Panc1 (cell line): ENCODE measurements at regions of chr17 and their contacts with region 1.

Region 1: GRCh38 chr17:41548844-41549595 is 20.9 kb upstream of the KRT19 start:
- DNase-seq: no peak
- ATAC-seq: peak; percentile 88
- H3K4me3 ChIP-seq: peak overlapping the region; percentile 24 to 39
- H3K27ac ChIP-seq: peak overlapping the region; percentile 91
- H3K4me1 ChIP-seq: peaks cover 41% of the 10 kb centered on the region
- H3K27me3 ChIP-seq: no peaks in the 10 kb centered on the region
- CTCF ChIP-seq: peak; percentile 95

Region 2: DNA sequence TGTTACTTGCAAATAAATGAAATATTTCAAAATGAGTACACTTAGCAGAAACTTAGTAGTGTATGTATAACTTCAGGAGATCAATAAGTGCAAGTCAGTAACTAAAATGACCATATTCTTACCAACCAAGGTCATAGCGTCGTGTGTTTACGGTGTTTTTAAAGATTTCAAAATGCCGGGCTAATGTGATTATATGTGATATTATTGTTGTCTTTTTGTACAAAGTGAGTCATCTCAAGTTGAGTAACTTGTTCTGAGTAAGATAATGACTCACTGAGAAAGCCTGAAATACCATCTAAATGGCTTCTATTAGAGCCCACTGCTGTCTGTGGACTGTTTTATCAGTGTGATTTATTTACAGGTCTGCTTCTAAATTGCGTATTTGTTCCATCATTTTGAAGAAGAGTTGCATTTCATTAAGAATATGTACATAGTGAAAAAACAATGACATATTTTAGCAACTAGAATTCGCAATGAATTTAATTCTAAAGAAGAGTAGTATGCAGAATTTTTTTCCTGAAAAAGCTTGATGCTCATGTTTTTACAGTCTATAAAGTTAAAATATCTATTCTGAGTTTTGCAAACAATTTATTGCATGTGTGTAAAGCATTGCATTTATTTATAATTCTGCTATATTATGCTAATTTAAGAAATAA is 694.7 kb before region 1 on chr17:
- CTCF ChIA-PET with region 1: interaction called, 5 read pairs
- POLR2A ChIA-PET with region 1: no interaction called
- in situ Hi-C with region 1: no loop called
- intact Hi-C with region 1: loop called (anchors 5 kb)
- DNase-seq: peak; percentile 50
- ATAC-seq: peak; percentile 85
- H3K4me3 ChIP-seq: no peak overlapping the region
- H3K27ac ChIP-seq: no peak overlapping the region
- H3K4me1 ChIP-seq: peaks cover 5% of the 10 kb centered on the region; the same call in 1 of the 2 replicates
- H3K27me3 ChIP-seq: no peaks in the 10 kb centered on the region
- CTCF ChIP-seq: no peak

Region 3: GRCh38 chr17:41322094-41322902 is 226.7 kb before region 1 on chr17:
- CTCF ChIA-PET with region 1: interaction called, 11 read pairs
- POLR2A ChIA-PET with region 1: no interaction called
- in situ Hi-C with region 1: no loop called
- intact Hi-C with region 1: no loop called
- DNase-seq: peak; percentile 57
- ATAC-seq: peak; percentile 72
- H3K4me3 ChIP-seq: no peak overlapping the region
- H3K27ac ChIP-seq: no peak overlapping the region
- H3K4me1 ChIP-seq: no peaks in the 10 kb centered on the region
- H3K27me3 ChIP-seq: no peaks in the 10 kb centered on the region
- CTCF ChIP-seq: peak; percentile 89

Region 4: GRCh38 chr17:41521574-41522261 is 27.3 kb before region 1 on chr17:
- CTCF ChIA-PET with region 1: interaction called, 46 read pairs
- POLR2A ChIA-PET with region 1: interaction called, 12 read pairs
- in situ Hi-C with region 1: no loop called
- intact Hi-C with region 1: no loop called
- DNase-seq: peak; percentile 74
- ATAC-seq: peak; percentile 63
- H3K4me3 ChIP-seq: peak overlapping the region in 1 of 2 experiments; percentile 9; a peak in 1 of 4 replicates
- H3K27ac ChIP-seq: peak overlapping the region; percentile 96
- H3K4me1 ChIP-seq: peaks cover 86% of the 10 kb centered on the region
- H3K27me3 ChIP-seq: no peaks in the 10 kb centered on the region
- CTCF ChIP-seq: no peak

Region 5: DNA sequence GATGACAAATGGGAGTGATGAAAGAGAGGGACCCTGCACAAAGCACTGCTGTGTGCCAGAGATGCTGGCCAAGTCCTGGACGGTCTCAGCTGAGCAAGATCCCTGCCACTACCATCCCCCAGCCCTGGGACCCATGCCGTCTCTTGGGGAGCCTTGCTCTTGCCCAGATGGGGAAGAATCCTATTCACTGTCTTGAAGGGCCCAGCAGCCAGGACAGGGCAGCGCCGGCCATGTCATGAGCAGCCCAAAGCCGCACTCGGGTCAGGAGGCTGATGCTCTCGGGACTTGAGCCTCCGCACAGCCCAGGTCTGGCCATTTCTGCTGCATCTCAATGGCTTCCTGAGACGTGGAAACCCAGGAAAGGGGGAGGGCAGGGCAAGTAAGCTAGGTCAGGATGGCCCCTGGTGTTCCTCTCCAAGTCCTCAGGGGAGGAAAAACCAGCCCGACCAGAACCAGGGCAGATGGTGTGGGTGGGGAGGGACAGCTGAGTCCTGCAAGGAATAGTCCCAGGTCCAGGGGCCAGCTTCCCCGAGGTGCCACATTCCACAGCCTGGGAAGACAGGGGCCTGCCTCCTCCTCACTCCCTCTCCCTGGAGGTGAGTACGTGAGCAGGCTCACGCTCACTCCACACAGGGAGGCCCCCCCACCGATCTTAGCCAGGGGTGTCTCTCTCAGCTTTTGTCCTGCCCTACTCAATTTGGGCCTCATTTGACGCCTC is 13.1 kb before region 1 on chr17:
- CTCF ChIA-PET with region 1: interaction called, 42 read pairs
- POLR2A ChIA-PET with region 1: no interaction called
- in situ Hi-C with region 1: no loop called
- intact Hi-C with region 1: no loop called
- DNase-seq: no peak
- ATAC-seq: no peak
- H3K4me3 ChIP-seq: no peak overlapping the region
- H3K27ac ChIP-seq: peak overlapping the region; percentile 70
- H3K4me1 ChIP-seq: peaks cover 68% of the 10 kb centered on the region
- H3K27me3 ChIP-seq: no peaks in the 10 kb centered on the region
- CTCF ChIP-seq: no peak

Region 6: DNA sequence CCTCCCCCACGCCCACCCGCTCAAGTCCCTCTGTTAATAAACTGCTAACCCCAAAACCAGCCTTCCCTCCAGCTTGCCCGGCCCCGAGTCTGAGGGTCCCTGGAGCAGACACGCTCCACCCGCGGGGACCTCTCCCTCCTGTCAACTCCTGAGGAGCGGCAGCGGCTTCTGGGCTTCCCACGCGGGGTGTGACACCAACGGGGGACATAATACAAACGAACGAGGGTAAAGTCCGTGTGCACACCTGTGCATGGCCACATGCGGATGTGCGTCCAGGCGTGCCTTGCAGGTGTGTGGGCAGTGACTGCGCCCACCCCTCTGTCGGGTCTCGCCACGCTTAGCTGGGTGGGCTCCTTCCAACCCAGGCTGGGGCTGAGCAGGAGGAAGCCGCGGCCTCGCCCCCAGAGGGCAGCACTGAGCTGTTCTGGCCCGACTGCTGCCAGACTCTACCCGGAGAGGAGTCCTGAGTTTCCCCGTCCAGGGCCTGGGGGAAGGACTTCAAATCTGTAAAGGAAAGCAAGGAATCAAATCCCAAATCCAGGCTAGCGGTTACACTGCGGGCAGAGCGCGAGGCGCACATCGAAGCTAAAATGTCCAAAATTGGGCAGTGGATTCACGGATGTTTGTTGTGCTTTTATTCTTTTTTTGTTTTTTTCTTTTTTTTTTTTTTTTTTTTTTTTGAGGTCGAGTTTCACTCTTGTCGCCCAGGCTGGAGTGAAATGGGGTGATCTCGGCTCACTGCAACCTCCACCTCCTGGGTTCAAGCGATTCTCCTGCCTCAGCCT is 99.6 kb after region 1 on chr17:
- CTCF ChIA-PET with region 1: interaction called, 106 read pairs
- POLR2A ChIA-PET with region 1: interaction called, 3 read pairs
- in situ Hi-C with region 1: loop called (anchors 25 kb)
- intact Hi-C with region 1: loop called (anchors 1 kb)
- DNase-seq: peak; percentile 42
- ATAC-seq: peak; percentile 91
- H3K4me3 ChIP-seq: peak overlapping the region; percentile 21 to 56
- H3K27ac ChIP-seq: peak overlapping the region; percentile 44
- H3K4me1 ChIP-seq: peaks cover 21% of the 10 kb centered on the region
- H3K27me3 ChIP-seq: no peaks in the 10 kb centered on the region
- CTCF ChIP-seq: peak; percentile 88